A673 (cell line): ENCODE measurements at regions of chr2 and their contacts with region 1.

Region 1: GRCh38 chr2:47617028-47617427 is 165.9 kb upstream of the MSH6 start:
- DNase-seq: no peak
- H3K4me3 ChIP-seq: no peak overlapping the region
- H3K27ac ChIP-seq: no peak overlapping the region
- H3K4me1 ChIP-seq: no peaks in the 10 kb centered on the region
- H3K27me3 ChIP-seq: no peaks in the 10 kb centered on the region
- CTCF ChIP-seq: no peak

Region 2: GRCh38 chr2:47437287-47437686 is 179.7 kb before region 1 on chr2:
- CTCF ChIA-PET with region 1: no interaction called
- POLR2A ChIA-PET with region 1: interaction called, 11 read pairs
- intact Hi-C with region 1: no loop called
- DNase-seq: peak; percentile 46
- H3K4me3 ChIP-seq: no peak overlapping the region
- H3K27ac ChIP-seq: no peak overlapping the region
- H3K4me1 ChIP-seq: no peaks in the 10 kb centered on the region
- H3K27me3 ChIP-seq: no peaks in the 10 kb centered on the region
- CTCF ChIP-seq: peak; percentile 60